Sigmoid colon (tissue), 7 donors: ENCODE measurements at regions of chr9 and their contacts with region 1.

Region 1: DNA sequence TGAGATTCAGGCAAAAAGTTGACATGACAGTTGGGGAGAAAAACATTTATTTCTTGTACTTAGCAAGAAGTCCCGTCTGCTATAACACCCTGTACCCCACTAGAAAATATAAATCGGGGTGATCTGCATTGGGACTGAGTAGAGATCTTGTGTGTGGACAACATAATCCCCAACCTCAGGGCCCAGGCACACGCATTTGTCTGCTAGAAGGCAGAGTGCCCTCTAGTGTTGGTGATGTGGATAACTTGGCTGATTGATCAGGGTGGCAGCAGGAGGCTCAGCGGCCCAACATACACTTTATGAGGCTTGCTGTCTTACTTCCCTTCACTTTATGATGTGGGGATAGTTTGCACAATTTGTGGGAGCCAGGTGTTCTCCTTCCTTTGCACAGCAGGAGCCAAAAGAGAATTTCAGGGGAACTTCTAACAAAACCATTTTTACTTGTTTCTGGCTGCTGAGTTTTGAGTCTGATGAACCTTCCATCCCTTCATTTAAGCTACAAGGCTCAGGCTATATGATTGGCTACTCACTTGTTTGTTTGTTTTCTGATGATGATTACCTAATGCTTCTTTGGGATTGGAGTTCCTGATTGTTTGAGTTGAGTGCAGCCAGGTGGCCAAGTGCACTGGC is 263.2 kb downstream of the DMAC1 start:
- DNase-seq: no peak
- H3K4me3 ChIP-seq: no peak overlapping the region
- H3K27ac ChIP-seq: no peak overlapping the region
- H3K4me1 ChIP-seq: no peaks in the 10 kb centered on the region
- H3K27me3 ChIP-seq: no peaks in the 10 kb centered on the region
- CTCF ChIP-seq: peak in 3 of 4 experiments; percentile 27 to 49 (median 32)
- EP300 ChIP-seq: no peak
- POLR2A ChIP-seq: no peak

Region 2: DNA sequence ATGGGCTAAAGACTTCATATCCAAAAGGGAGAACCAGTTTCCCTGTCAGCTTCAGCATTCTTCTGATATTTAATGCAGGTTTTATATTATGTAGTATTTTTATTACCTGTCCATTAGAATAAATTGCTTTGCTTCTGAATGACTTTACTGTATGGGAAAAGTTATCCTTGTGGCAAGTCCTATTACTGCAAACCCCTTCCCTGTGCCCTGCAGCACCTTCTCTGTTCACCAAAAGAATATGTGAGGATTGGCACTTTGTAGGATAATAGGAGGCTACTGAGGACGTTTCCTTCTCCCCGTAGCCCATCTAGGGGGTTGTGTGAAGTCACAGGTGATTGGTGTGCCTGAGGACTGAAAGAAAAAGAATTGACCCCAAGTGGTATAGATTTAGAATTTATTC is 482.5 kb before region 1 on chr9:
- intact Hi-C with region 1: loop called (anchors 5 kb)
- DNase-seq: no peak
- H3K4me3 ChIP-seq: no peak overlapping the region
- H3K27ac ChIP-seq: no peak overlapping the region
- H3K4me1 ChIP-seq: no peaks in the 10 kb centered on the region
- H3K27me3 ChIP-seq: no peaks in the 10 kb centered on the region
- CTCF ChIP-seq: no peak
- EP300 ChIP-seq: no peak
- POLR2A ChIP-seq: no peak